ENCODE measurements at regions of chr1 and their contacts with region 1.

Region 1: DNA sequence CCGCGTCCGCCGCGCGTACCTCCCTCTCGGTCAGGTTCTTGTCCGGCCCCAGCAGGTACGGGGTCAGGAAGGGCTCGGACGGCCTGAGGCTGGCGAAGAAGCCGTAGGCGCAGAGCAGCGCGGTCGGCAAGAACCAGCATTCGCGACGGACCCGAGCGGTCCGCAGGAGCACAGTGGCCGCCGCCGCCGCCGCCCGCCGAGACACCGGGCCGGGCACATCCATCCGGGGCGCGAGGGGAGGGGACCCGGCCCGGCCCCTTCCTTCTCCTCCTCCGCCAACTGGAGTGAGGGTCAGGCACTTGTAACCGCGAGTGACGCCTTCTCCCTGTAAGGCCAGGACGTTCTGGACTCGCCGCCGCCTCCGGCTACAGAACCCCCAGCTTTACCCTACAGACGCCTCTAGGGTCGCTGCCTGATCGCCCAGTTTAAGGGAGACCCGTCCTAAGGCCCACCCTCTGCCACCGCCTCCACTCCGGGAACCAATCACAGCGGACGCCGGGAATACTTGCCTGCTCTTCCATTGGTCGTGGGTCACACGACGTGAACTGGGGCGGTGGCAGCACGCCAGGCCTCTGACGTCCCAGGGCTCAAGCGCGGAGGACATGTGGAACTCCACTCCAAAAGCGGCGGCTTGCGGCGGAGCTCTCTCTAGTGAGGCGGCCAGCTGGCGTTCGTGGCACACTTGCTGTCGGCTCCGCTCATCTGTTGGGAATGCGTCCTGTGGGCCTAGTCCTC is at the start of gene SLC19A2:
- DNase-seq: peak; percentile 94
- H3K4me3 Mint-ChIP-seq: peak within 1 kb of the TSS; percentile 89
- H3K27ac Mint-ChIP-seq: peak within 1 kb of the TSS; percentile 90
- H3K4me1 Mint-ChIP-seq: peaks cover 59% of the 10 kb centered on the region
- H3K27me3 Mint-ChIP-seq: no peaks in the 10 kb centered on the region
- total RNA-seq, gene SLC19A2: 11.2 and 11.9 TPM in 2 replicates

Region 2: DNA sequence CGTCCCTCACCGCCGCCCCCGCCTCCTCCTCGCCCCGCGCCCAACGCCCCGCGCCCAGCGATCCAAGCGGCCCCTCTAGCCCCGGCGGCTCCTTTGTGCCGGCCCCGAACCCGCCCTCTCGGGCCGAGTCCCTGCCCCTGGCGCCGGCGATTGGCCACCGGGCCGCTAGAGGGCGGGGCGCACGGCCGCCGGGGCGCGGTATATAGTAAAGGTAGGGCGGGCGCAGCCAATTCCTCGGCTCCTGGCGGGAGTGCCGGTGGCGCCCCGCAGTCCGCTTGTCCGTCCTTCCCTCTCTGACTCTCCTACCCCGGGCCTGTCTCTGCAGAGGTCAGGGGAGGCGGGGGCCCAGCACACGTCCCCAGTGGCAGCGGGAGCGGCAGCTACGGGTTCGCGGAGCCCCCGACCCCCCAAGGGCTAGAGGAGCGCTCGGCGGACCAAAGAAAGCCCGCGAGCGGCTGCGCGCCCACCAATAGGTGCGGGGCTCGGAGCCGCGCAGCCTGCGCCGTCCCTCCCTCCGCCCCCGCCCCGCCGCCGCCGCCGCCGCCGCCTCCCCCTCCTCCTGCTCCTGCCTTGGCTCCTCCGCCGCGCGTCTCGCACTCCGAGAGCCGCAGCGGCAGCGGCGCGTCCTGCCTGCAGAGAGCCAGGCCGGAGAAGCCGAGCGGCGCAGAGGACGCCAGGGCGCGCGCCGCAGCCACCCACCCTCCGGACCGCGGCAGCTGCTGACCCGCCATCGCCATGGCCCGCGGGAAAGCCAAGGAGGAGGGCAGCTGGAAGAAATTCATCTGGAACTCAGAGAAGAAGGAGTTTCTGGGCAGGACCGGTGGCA is 379.4 kb before region 1 on chr1 and contains the start of gene ATP1B1:
- intact Hi-C with region 1: loop called (anchors 5 kb)
- DNase-seq: peak; percentile 79
- H3K4me3 Mint-ChIP-seq: peak within 1 kb of the TSS; percentile 88
- H3K27ac Mint-ChIP-seq: peak within 1 kb of the TSS; percentile 78
- H3K4me1 Mint-ChIP-seq: peaks cover 42% of the 10 kb centered on the region
- H3K27me3 Mint-ChIP-seq: peaks cover 9% of the 10 kb centered on the region
- total RNA-seq, gene ATP1B1: 12.6 and 13.5 TPM in 2 replicates

Region 3: DNA sequence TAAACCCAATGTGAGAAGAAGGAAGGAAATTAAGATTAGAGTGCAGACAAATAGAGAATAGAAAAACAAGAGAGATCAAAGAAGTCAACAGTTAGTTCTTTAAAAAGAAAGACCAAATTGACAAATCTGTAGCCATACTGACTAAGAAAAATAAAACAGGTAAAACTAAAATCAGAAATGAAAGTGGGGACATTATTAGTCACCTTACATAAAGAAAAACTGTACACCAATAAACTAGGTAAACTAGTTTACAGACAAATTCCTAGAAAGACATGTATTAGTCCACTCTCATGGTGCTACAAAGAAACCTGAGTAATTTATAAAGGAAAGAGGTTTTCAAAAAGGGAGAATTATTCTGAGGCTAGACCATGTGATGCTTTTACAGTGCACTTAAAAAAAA is 95.4 kb before region 1 on chr1:
- intact Hi-C with region 1: loop called (anchors 1 kb)
- DNase-seq: no peak
- H3K4me3 Mint-ChIP-seq: no peak overlapping the region
- H3K27ac Mint-ChIP-seq: peak overlapping the region; percentile 29
- H3K4me1 Mint-ChIP-seq: peaks cover 19% of the 10 kb centered on the region
- H3K27me3 Mint-ChIP-seq: no peaks in the 10 kb centered on the region

Region 4: DNA sequence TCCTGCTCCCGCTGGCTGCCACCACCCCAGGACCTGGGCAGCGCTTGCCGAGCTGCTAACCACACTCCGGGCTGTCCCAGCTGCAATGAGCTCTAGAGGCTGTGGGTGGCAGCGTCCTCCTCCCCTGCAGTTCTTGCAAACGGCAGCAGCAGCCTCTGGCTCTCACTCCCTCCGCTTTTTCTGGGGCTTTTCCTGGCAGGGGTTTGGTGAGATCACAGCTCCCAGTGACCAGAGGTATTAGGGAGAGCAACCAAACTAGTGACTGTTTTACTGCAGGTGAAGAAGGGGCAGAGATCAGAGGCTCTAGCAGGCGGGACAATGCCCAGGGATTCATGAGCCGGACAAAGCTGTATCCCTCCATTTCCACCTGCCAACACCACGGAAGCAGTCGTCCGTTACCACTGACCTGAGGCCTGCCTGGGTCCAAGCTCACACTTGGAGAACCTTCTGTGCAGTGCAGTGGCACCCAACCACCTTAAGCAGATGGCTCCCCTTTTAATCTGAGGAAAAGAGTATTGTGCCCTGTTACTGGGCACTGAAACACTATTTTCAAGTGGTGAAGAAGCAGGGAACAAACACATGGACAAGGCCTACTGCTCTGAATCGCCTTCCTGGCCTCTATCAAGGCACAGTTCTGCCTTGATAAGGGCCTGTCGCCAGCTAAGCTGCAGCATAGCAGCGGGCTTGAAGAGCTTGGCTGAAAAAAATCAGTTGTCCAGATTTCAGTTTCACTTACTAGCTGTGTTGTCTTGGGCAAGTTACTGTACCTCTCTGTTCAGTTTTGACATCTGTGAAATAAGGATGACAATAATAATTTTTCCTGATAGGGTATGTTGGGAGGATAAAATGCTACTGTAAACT is 100.9 kb after region 1 on chr1 and contains the start of gene F5:
- intact Hi-C with region 1: loop called (anchors 2 kb)
- DNase-seq: peak; percentile 69
- H3K4me3 Mint-ChIP-seq: peak within 1 kb of the TSS; percentile 89
- H3K27ac Mint-ChIP-seq: peak within 1 kb of the TSS; percentile 83
- H3K4me1 Mint-ChIP-seq: peaks cover 59% of the 10 kb centered on the region
- H3K27me3 Mint-ChIP-seq: no peaks in the 10 kb centered on the region
- total RNA-seq, gene F5: 25.0 and 26.0 TPM in 2 replicates

Region 5: GRCh38 chr1:169722776-169723175 is 237.1 kb after region 1 on chr1:
- intact Hi-C with region 1: no loop called
- DNase-seq: no peak
- H3K4me3 Mint-ChIP-seq: no peak overlapping the region
- H3K27ac Mint-ChIP-seq: no peak overlapping the region
- H3K4me1 Mint-ChIP-seq: peaks cover 5% of the 10 kb centered on the region
- H3K27me3 Mint-ChIP-seq: peaks cover 18% of the 10 kb centered on the region

Region 6: GRCh38 chr1:169794530-169795416 is 309.1 kb after region 1 on chr1 and contains the start of gene METTL18:
- intact Hi-C with region 1: loop called (anchors 5 kb)
- DNase-seq: peak; percentile 92
- H3K4me3 Mint-ChIP-seq: peak within 1 kb of the TSS; percentile 92
- H3K27ac Mint-ChIP-seq: peak within 1 kb of the TSS; percentile 98
- H3K4me1 Mint-ChIP-seq: peaks cover 51% of the 10 kb centered on the region
- H3K27me3 Mint-ChIP-seq: no peaks in the 10 kb centered on the region
- total RNA-seq, gene METTL18: 8.9 and 10.9 TPM in 2 replicates

Region 7: GRCh38 chr1:170074250-170075157 is 588.8 kb after region 1 on chr1 and contains the start of gene KIFAP3:
- intact Hi-C with region 1: loop called (anchors 2 kb)
- DNase-seq: peak; percentile 96
- H3K4me3 Mint-ChIP-seq: peak within 1 kb of the TSS; percentile 96
- H3K27ac Mint-ChIP-seq: peak within 1 kb of the TSS; percentile 94
- H3K4me1 Mint-ChIP-seq: peaks cover 28% of the 10 kb centered on the region
- H3K27me3 Mint-ChIP-seq: no peaks in the 10 kb centered on the region
- total RNA-seq, gene KIFAP3: 15.1 and 15.5 TPM in 2 replicates

Measured in activated T-helper 2 cell treated with anti-CD3 and anti-CD28 coated beads, Interferon-gamma antibody, Interleukin-2, Interleukin-4, amounts not matched to agents 10 μg/mL and 5 μg/mL and 100 μg/mL, durations not matched to agents 14 hours and 24 hours and 36 hours (primary cell).